Spleen (tissue), 13 donors: ENCODE measurements at regions of chr12 and their contacts with region 1.

Region 1: GRCh38 chr12:54751493-54751892 is 102.8 kb upstream of the MUCL1 start:
- DNase-seq: no peak
- H3K4me3 ChIP-seq: no peak overlapping the region
- H3K27ac ChIP-seq: no peak overlapping the region
- H3K4me1 ChIP-seq: peaks cover 0 to 15% (median 5%) of the 10 kb centered on the region in 6 donors
- H3K27me3 ChIP-seq: no peaks in the 10 kb centered on the region
- CTCF ChIP-seq: no peak
- POLR2A ChIP-seq: no peak

Region 2: DNA sequence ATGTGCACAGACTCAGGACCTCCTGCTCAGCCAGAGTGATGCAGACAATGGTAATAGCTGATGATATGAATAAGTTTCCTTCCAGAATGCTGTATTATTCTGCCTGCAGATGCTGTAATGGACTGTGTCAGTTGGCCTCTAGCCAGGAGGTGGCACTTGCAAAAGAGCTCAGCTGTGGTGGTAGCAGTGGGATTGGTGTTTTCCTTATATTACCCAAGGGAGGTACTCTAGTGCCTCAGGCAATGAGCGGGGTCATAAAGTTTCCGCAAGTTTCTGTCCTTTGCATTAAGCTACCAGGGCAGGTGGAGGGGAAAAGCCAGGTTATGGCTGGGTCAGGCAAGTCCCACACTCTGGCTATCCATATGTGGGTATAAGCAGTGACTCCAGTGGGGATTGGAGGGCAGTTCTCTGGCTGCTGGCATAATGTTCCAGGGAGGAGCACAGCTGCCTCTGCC is 88.9 kb after region 1 on chr12:
- intact Hi-C with region 1: no loop called
- DNase-seq: no peak
- H3K4me3 ChIP-seq: no peak overlapping the region
- H3K27ac ChIP-seq: no peak overlapping the region
- H3K4me1 ChIP-seq: no peaks in the 10 kb centered on the region
- H3K27me3 ChIP-seq: no peaks in the 10 kb centered on the region
- CTCF ChIP-seq: no peak
- POLR2A ChIP-seq: no peak

Region 3: DNA sequence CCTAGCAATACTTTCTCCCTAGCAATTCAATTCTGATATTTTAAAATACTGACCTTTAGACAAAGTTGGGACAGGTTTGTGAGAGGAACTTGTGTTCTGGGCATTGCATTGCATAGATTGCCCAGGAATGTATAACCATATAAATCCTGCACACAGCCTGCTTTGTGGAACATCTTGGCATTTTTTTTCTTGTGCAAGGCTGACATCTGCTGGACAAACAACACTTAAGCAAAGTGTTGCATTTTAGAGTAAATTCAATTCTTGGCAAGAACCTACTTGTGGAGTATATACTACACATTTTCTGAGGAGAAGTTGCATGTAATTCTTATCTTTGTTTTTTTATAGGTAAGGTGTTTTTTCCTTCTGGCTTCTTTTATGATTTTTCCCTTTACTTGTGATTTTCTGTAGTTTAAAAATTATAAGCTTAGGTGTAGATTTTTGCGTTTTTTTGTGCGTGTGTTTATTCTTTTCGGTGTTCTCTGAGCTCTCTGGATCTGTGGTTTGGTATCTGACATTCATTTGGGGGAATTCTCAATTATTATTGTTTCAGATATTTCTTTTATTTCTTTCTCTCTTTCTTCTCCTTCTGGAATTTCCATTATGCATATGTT is 206.7 kb after region 1 on chr12:
- intact Hi-C with region 1: loop called (anchors 5 kb)
- DNase-seq: no peak
- H3K4me3 ChIP-seq: no peak overlapping the region
- H3K27ac ChIP-seq: no peak overlapping the region
- H3K4me1 ChIP-seq: peaks cover 4 to 35% (median 22%) of the 10 kb centered on the region in 6 donors
- H3K27me3 ChIP-seq: no peaks in the 10 kb centered on the region
- CTCF ChIP-seq: peak; percentile 43 to 76 (median 58)
- POLR2A ChIP-seq: no peak